Heart left ventricle (tissue), 16 donors: ENCODE measurements at regions of chr11 and their contacts with region 1.

Region 1: GRCh38 chr11:56950510-56950909 is 38.2 kb upstream of the OR5AK2 start:
- DNase-seq: no peak
- ATAC-seq: no peak
- H3K4me3 ChIP-seq: no peak overlapping the region
- H3K27ac ChIP-seq: no peak overlapping the region
- H3K4me1 ChIP-seq: peaks cover 0 to under 1% (median 0%) of the 10 kb centered on the region in 12 donors
- H3K27me3 ChIP-seq: no peaks in the 10 kb centered on the region
- CTCF ChIP-seq: peak in 1 of 12 donors; percentile 19
- POLR2A ChIP-seq: no peak

Region 2: GRCh38 chr11:57116654-57117053 is 166.1 kb after region 1 on chr11:
- intact Hi-C with region 1: loop called in 1 of 10 experiments (anchors 10 kb)
- DNase-seq: peak in 1 of 5 donors; percentile 31
- ATAC-seq: peak in 3 of 4 donors; percentile 42 to 63 (median 48)
- H3K4me3 ChIP-seq: no peak overlapping the region
- H3K27ac ChIP-seq: no peak overlapping the region
- H3K4me1 ChIP-seq: peaks cover 0 to under 1% (median 0%) of the 10 kb centered on the region in 12 donors
- H3K27me3 ChIP-seq: no peaks in the 10 kb centered on the region
- CTCF ChIP-seq: peak; percentile 43 to 68 (median 56)
- POLR2A ChIP-seq: no peak